ENCODE measurements at regions of chr17 and their contacts with region 1.

Region 1: GRCh38 chr17:45834471-45835396 is 9.9 kb upstream of the SPPL2C start:
- DNase-seq: no peak
- ATAC-seq: no peak
- H3K4me3 Mint-ChIP-seq: no peak overlapping the region
- H3K27ac Mint-ChIP-seq: no peak overlapping the region
- H3K4me1 Mint-ChIP-seq: no peaks in the 10 kb centered on the region
- H3K27me3 Mint-ChIP-seq: no peaks in the 10 kb centered on the region

Region 2: GRCh38 chr17:45428050-45428617 is 406.6 kb before region 1 on chr17:
- CTCF ChIA-PET with region 1: interaction called, 5 read pairs
- POLR2A ChIA-PET with region 1: no interaction called
- intact Hi-C with region 1: loop called in 1 of 2 experiments (anchors 10 kb)
- DNase-seq: peak; percentile 88
- ATAC-seq: peak; percentile 79
- H3K4me3 Mint-ChIP-seq: peak overlapping the region; percentile 9
- H3K27ac Mint-ChIP-seq: no peak overlapping the region
- H3K4me1 Mint-ChIP-seq: peaks cover 21% of the 10 kb centered on the region
- H3K27me3 Mint-ChIP-seq: peaks cover 6% of the 10 kb centered on the region